Activated CD4-positive, alpha-beta T cell treated with anti-CD3 and anti-CD28 coated beads, Interleukin-2, amount 10 ng/mL, durations not matched to agents 24 days and 14 days (primary cell): ENCODE measurements at regions of chr16 and their contacts with region 1.

Region 1: DNA sequence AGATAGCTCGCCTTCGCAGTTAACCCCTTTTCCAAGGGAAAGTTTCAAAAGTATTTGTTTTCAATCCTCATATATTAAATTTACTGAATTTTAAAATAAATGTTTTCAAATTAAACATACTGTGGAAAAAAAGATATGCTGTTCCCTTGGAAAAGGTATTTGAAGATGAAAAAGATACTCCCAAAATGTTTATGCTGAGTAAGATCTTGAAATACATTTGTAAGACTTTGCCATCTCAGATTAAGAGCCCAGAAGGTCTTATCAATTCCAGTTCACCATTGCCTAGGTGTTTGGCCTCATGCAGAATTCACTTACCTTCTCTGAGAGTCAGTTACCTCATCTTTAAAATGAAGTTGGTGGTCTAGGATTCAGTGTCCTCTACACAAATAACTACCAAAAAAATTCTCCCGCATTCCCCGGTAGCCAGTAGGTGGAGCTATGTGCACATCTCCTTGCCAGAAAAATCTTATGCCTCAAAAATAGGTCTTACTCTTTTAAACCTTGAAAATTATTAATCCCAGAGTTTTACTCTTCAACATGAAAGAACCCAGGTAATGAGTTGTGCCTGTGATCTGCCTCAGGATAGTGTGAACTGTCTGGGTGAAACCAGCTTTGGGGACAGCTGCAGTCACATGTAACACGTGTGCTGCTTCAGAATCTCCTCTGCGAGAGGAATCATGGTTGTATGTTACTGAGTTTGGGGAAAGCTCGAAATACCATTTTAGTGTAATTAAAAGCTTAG is 178.3 kb downstream of the MRTFB start:
- DNase-seq: peak; percentile 84
- H3K4me3 Mint-ChIP-seq: no peak overlapping the region
- H3K27ac Mint-ChIP-seq: no peak overlapping the region
- H3K4me1 Mint-ChIP-seq: no peaks in the 10 kb centered on the region
- H3K27me3 Mint-ChIP-seq: no peaks in the 10 kb centered on the region

Region 2: GRCh38 chr16:14529010-14529669 is 279.7 kb after region 1 on chr16:
- intact Hi-C with region 1: loop called (anchors 1 kb)
- DNase-seq: peak; percentile 85
- H3K4me3 Mint-ChIP-seq: no peak overlapping the region
- H3K27ac Mint-ChIP-seq: no peak overlapping the region
- H3K4me1 Mint-ChIP-seq: peaks cover 5% of the 10 kb centered on the region
- H3K27me3 Mint-ChIP-seq: no peaks in the 10 kb centered on the region

Region 3: GRCh38 chr16:14600164-14600563 is 350.7 kb after region 1 on chr16:
- intact Hi-C with region 1: loop called (anchors 10 kb)
- DNase-seq: no peak
- H3K4me3 Mint-ChIP-seq: no peak overlapping the region
- H3K27ac Mint-ChIP-seq: no peak overlapping the region
- H3K4me1 Mint-ChIP-seq: no peaks in the 10 kb centered on the region
- H3K27me3 Mint-ChIP-seq: no peaks in the 10 kb centered on the region